Adrenal gland (tissue), 19 donors: ENCODE measurements at regions of chr20 and their contacts with region 1.

Region 1: DNA sequence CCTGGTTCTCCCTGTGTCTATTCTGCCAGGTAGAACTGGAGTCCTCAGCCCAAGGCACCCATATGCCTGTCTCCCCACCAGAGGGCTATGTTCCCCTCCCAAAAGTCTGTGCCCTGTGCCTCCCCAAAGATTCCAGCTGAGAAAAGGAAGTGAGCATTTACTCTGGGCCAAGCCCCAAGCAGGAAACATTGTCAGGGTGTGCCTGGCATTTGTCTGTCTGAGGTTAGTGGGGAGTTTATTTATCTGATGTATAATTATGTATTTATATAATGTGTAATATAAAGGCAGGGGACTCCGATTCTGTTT is 5.6 kb downstream of the GDF5 start:
- DNase-seq: no peak
- H3K4me3 ChIP-seq: no peak overlapping the region
- H3K27ac ChIP-seq: no peak overlapping the region
- H3K4me1 ChIP-seq: no peaks in the 10 kb centered on the region
- H3K27me3 ChIP-seq: no peaks in the 10 kb centered on the region
- CTCF ChIP-seq: no peak
- POLR2A ChIP-seq: no peak

Region 2: DNA sequence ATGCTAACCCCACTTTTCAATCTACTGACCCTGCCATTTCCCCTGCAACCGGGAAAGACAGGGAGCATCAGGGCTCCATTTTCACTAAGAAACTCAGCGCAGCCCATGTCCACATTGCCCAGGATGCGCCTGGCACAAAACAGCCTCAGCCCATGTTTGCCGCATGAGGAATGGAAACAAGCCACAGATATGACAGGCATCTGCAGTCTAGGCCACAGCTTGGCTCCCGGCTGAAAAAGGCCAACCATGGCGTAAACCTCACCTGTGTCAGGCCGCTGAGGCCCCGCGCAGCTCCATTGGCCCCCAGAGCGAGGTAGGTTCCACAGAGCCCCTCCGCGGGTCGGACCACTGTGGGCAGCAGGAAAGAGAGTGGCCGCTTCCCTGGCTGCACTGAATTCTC is 581.4 kb before region 1 on chr20:
- intact Hi-C with region 1: loop called in 1 of 2 experiments (anchors 10 kb)
- DNase-seq: peak in 1 of 7 donors; percentile 28
- H3K4me3 ChIP-seq: no peak overlapping the region
- H3K27ac ChIP-seq: no peak overlapping the region
- H3K4me1 ChIP-seq: no peaks in the 10 kb centered on the region
- H3K27me3 ChIP-seq: no peaks in the 10 kb centered on the region
- CTCF ChIP-seq: no peak
- POLR2A ChIP-seq: no peak

Region 3: DNA sequence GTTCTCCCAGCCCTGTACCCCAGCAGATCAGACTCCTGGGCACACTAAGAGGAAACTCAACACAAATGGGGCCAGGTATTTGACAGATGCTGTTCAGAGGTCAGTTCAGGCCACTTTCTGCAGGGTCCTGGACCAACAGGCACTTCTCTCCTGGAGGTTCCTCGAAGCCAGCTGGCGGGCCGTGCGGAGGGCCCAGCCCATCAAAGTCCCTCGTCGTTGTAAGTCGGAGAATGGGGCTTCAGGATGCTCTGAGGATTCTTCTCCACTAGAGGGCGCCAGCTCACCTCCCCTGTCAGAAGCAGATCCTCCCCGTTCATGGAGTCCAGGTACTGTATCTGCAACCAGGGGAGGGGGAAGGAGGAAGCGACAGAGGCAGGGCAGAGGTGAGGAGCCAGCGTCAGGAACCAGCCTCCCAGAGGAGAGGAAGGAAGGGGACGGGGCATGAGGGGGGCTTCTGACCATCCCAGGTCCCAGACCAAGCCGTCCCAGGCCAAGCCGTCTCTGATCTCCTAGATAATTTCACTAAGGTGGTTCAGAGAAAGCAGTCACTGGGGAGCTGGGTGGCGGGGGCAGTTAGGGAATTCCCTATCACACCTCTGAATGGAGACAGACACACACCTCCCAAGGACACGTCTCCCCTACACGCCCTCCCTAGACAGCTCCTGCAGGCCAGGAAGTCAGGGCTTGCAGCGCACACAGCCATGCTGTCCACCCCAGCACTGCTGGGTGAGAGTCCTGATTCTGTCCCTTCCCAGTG is 128.5 kb before region 1 on chr20:
- intact Hi-C with region 1: loop called in 1 of 2 experiments (anchors 5 kb)
- DNase-seq: peak; percentile 81 to 95 (median 87)
- H3K4me3 ChIP-seq: no peak overlapping the region
- H3K27ac ChIP-seq: peak overlapping the region in 1 of 5 donors; percentile 59
- H3K4me1 ChIP-seq: peaks cover 10 to 20% of the 10 kb centered on the region in 2 donors
- H3K27me3 ChIP-seq: no peaks in the 10 kb centered on the region
- CTCF ChIP-seq: peak; percentile 88 to 94 (median 91)
- POLR2A ChIP-seq: no peak

Region 4: DNA sequence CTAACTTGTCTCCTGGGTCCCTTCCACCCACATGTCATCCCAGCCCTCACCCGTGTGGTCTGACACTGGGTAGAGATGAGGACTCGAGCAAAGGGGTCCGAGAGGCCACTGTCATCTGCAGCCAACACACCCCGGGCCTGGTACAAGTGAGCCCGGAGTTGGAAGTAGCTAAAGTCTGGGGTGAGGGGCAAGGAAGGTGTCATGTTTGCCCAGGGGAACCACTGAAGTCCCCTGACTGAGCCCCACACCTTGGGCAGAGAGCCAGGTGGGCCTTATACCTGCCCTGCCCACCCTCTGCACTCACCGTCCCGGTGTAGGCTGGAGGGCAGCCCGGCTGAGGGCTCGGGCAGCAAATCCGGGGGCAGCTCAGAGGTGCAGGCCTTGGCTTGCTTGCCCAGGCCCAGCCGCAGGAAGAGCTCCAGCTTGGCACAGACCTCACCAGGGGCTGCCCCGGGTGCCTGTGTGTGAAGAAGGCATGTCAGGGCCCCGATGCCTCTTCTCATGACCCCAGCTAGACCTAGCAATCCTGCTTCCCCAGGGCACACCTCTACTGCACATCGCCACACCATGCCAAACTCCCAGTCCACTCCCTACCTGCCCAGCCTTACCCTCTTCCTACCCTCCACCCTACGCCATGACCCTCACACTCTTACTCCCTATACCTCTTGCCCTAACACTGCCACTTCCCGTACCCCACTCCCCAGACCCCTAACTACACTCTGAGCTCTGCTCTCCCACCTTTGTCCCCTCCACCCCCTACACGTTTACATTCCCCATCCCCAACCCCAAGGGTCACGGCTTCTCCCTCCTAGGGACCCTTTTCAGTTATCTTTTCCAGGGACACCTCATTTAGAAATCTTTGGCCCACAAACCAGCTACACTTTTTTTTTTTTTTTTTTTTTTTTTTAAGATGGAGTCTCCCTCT is 151.5 kb after region 1 on chr20:
- intact Hi-C with region 1: no loop called
- DNase-seq: no peak
- H3K4me3 ChIP-seq: no peak overlapping the region
- H3K27ac ChIP-seq: no peak overlapping the region
- H3K4me1 ChIP-seq: no peaks in the 10 kb centered on the region
- H3K27me3 ChIP-seq: no peaks in the 10 kb centered on the region
- CTCF ChIP-seq: no peak
- POLR2A ChIP-seq: no peak